BJ (cell line): ENCODE measurements at regions of chr20 and their contacts with region 1.

Region 1: DNA sequence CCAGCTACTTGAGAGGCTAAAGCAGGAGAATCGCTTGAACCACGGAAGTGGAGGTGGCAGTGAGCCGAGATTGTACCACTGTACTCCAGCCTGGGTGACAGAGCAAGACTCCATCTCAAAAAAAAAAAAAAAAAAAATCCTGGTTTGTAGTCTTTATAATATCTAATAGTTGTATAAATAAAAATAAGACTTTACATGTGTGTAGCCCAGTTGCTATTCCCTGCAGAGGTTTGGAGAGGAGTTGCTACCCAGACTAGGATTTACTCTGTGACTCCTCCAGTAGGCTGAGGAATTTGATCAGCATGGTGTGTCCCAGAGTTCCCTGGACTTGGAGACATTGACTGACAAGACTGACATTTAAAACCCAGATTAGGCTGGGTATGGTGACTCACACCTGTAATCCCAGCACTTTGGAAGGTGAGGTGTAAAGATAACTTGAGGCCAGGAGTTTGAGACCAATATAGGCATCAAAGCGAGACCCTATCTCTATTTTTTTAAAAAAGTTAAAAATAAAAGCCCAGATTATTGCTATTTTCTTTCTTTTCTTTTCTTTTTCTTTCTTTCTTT is 10.2 kb downstream of the CHMP4B start:
- DNase-seq: no peak
- H3K4me3 ChIP-seq: no peak overlapping the region
- H3K27me3 ChIP-seq: no peaks in the 10 kb centered on the region
- CTCF ChIP-seq: no peak

Region 2: GRCh38 chr20:33666293-33667244 is 154.8 kb before region 1 on chr20 and contains the start of gene ACTL10:
- CTCF ChIA-PET with region 1: no interaction called
- POLR2A ChIA-PET with region 1: no interaction called
- DNase-seq: peak; percentile 91
- H3K4me3 ChIP-seq: peak within 1 kb of the TSS; percentile 46
- H3K27me3 ChIP-seq: no peaks in the 10 kb centered on the region
- CTCF ChIP-seq: peak; percentile 68
- polyA plus RNA-seq, gene ACTL10: 0.44 and 0.67 TPM in 2 replicates

Region 3: DNA sequence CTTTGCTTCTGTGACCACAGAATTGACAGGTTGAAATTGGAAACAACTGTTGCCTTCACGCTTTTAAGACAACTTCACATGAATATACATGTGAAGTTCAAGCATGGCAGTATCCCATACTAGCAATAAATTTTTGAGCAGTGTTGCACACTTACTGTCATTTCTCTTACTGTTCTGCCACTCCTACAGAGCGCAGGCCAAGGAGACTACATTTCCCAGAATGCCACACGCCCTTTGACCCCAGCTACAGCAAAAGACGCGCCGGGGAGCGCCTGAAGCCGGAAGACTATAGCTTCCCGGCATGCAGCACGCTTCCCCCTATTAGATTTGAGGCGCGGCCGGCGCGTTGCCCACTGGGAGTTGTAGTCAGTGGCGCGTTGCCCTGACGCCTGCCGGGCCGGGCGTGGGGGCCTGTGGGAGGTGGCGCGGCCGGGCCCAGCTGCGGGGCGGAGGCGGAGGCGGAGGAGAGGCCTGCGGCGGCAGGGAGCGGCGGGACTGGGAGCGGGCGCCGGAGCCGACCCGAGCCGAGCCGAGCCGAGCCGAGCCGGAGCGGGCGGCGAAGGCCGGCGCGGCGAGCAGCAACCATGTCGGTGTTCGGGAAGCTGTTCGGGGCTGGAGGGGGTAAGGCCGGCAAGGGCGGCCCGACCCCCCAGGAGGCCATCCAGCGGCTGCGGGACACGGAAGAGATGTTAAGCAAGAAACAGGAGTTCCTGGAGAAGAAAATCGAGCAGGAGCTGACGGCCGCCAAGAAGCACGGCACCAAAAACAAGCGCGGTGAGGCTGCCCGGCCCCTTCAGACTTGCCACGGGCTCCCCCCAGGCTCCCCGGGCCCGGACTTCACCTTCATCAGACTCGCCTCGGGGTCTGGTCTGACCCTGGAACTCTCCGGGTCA is 10.2 kb before region 1 on chr20 and contains the start of gene CHMP4B:
- CTCF ChIA-PET with region 1: interaction called, 7 read pairs
- POLR2A ChIA-PET with region 1: interaction called, 12 read pairs
- DNase-seq: peak; percentile 92
- H3K4me3 ChIP-seq: peak within 1 kb of the TSS; percentile 93
- H3K27me3 ChIP-seq: no peaks in the 10 kb centered on the region
- CTCF ChIP-seq: no peak
- polyA plus RNA-seq, gene CHMP4B: 65.3 and 84.0 TPM in 2 replicates

Region 4: DNA sequence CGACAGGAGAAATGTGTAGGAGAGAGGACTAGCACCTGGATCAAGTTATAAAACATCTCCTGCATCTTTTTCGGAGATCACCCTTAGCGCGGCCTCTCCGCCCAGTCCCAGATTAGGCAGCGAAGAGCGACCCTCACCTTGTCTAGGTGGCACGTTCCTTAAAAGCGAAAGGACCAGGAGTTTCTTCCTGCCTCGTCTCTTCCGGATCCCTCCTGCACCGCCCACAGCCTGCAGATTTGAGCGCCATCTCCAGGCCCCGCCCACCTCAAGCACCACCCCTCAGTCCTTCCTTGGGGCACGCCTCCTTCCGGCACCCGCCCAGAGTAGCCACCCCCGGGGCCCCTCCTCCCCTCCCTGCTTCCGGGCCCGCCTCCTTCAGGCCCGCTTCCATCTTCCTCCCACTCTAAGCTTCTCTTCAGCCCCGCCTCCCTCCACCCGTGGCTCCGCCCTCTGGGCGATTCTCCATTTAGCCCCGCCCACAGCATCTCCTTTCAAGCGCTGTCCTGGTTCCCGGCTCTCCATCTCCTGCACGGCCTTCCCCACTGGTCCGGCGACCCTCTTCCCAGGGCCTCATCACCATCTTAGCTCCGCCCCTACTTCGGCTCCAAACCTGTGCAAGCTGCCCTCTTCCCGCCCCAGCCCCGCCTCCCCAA is 171.7 kb after region 1 on chr20:
- CTCF ChIA-PET with region 1: no interaction called
- POLR2A ChIA-PET with region 1: interaction called, 11 read pairs
- DNase-seq: peak; percentile 98
- H3K4me3 ChIP-seq: peak overlapping the region; percentile 85
- H3K27me3 ChIP-seq: no peaks in the 10 kb centered on the region
- CTCF ChIP-seq: no peak

Region 5: DNA sequence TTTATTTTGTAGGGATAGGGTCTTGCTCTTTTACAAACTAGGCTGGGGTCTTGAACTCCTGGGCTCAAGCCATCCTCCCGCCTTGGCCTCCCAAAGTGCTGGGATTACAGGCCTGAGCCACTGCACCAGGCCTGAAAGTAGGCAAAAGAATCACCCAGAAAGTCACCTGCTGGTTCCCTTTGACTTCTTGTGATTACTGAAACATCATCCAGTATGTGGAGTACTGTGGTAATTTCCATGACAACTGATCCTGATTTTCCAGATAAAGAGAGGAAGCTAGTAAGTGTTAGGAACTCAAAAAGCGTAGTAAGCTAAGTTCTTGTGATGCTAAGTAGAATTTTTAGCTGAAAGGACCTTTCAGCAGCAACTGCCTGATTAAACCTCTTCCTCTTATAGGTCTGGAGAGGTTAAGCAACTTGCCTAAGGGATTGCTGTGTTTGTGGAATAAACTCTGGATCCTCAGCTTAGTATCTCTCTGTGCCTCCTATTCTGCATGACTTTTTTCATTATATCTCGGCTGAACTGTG is 189.1 kb after region 1 on chr20:
- CTCF ChIA-PET with region 1: no interaction called
- POLR2A ChIA-PET with region 1: no interaction called
- DNase-seq: no peak
- H3K4me3 ChIP-seq: no peak overlapping the region
- H3K27me3 ChIP-seq: no peaks in the 10 kb centered on the region
- CTCF ChIP-seq: no peak